A673 (cell line): ENCODE measurements at regions of chr6 and their contacts with region 1.

Region 1: DNA sequence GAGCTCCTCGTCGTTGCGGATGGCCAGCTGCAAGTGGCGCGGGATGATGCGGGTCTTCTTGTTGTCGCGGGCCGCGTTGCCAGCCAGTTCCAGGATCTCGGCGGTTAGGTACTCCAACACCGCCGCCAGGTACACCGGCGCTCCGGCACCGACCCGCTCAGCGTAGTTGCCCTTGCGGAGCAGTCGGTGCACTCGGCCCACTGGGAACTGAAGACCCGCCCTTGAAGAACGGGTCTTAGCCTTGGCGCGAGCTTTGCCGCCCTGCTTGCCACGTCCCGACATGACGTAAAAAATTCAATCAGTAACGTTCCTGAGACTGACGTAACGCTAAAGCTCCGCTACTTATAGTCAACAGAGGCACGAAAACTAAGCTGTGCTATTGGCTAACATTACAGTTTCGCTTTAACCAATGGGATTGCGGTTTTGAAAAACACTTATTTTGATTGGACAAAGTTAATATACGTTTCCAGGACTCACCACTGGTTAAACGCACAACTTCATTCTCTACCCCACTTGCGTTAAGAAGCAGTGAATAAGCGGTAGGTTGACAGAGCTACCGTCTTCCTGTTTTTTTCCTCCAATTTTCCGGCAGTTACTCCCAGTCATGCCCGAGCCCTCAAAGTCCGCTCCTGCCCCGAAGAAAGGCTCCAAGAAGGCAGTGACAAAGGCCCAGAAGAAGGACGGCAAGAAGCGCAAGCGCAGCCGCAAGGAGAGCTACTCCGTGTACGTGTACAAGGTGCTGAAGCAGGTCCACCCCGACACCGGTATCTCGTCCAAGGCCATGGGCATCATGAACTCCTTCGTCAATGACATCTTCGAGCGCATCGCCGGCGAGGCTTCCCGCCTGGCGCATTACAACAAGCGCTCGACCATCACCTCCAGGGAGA is 73.9 kb downstream of the OR2B2 start:
- DNase-seq: peak; percentile 98
- H3K4me3 ChIP-seq: peak overlapping the region; percentile 57
- H3K27ac ChIP-seq: peak overlapping the region; percentile 97
- H3K4me1 ChIP-seq: peaks cover 7% of the 10 kb centered on the region
- H3K27me3 ChIP-seq: no peaks in the 10 kb centered on the region
- CTCF ChIP-seq: no peak

Region 2: GRCh38 chr6:27374824-27375612 is 463.3 kb before region 1 on chr6:
- CTCF ChIA-PET with region 1: no interaction called
- POLR2A ChIA-PET with region 1: no interaction called
- intact Hi-C with region 1: no loop called
- DNase-seq: peak; percentile 82
- H3K4me3 ChIP-seq: peak overlapping the region; percentile 59
- H3K27ac ChIP-seq: no peak overlapping the region
- H3K4me1 ChIP-seq: no peaks in the 10 kb centered on the region
- H3K27me3 ChIP-seq: no peaks in the 10 kb centered on the region
- CTCF ChIP-seq: no peak

Region 3: GRCh38 chr6:27864906-27865849 is 26.9 kb after region 1 on chr6:
- CTCF ChIA-PET with region 1: no interaction called
- POLR2A ChIA-PET with region 1: interaction called, 62 read pairs
- intact Hi-C with region 1: loop called (anchors 2 kb)
- DNase-seq: peak; percentile 97
- H3K4me3 ChIP-seq: peak overlapping the region; percentile 68
- H3K27ac ChIP-seq: peak overlapping the region; percentile 93
- H3K4me1 ChIP-seq: peaks cover 7% of the 10 kb centered on the region
- H3K27me3 ChIP-seq: no peaks in the 10 kb centered on the region
- CTCF ChIP-seq: no peak

Region 4: DNA sequence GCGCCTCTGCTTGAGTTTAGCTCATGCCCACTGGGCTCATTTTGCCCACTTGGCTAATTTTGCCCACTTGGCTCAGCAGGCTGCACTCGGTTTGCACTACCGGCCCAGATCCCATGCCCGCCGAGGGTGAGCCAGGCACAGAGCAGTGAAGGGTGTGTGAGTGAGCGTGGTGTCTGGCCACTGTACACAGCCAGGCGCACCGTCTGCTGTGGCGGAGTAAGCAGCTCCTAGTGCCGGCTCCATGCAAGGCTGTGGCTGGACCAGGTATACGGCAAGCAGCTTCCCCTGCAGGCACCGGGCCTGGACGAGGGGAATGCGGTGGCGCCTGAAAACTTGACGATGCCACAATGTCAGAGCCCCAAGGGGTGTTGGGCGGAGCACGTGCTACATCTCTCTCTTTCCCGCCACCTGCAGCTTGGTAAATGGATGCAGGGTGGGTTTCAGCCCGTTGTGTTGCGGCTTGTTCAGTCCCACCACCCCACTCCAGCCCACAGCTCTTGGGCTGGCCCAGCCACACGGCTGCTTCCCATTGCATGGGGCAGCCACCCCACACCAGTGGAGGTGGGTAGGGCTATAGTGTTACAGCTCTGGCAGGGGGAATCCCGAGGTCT is 128.6 kb after region 1 on chr6:
- CTCF ChIA-PET with region 1: no interaction called
- POLR2A ChIA-PET with region 1: no interaction called
- intact Hi-C with region 1: no loop called
- DNase-seq: no peak
- H3K4me3 ChIP-seq: no peak overlapping the region
- H3K27ac ChIP-seq: no peak overlapping the region
- H3K4me1 ChIP-seq: no peaks in the 10 kb centered on the region
- H3K27me3 ChIP-seq: no peaks in the 10 kb centered on the region
- CTCF ChIP-seq: no peak

Region 5: DNA sequence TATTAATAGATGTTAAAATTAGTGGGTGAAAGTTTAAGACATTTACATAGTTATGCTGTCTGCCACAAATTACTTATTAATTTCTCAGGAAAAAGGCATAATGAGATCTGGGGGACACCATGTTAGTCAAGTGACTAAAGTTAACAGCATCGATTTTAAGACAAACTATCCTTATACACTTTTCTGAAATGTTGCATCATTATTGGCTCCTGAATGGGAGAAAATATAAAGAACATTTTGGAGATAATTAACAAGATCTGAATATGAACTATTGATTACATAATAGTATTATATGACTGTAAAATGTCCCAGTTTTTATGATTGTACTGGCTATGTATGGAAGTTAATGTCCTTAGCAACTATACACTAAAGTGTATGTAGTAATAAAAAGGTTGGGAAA is 1240.9 kb after region 1 on chr6:
- CTCF ChIA-PET with region 1: no interaction called
- POLR2A ChIA-PET with region 1: no interaction called
- intact Hi-C with region 1: no loop called
- DNase-seq: no peak
- H3K4me3 ChIP-seq: no peak overlapping the region
- H3K27ac ChIP-seq: no peak overlapping the region
- H3K4me1 ChIP-seq: no peaks in the 10 kb centered on the region
- H3K27me3 ChIP-seq: peaks cover 16% of the 10 kb centered on the region
- CTCF ChIP-seq: no peak